HCT116 (cell line): ENCODE measurements at regions of chr4 and their contacts with region 1.

Region 1: GRCh38 chr4:15956179-15956850 is 6.7 kb downstream of the FGFBP2 start:
- DNase-seq: peak; percentile 78
- ATAC-seq: peak; percentile 96
- H3K4me3 ChIP-seq: no peak overlapping the region
- H3K27ac ChIP-seq: no peak overlapping the region
- H3K4me1 ChIP-seq: peaks cover 0 to 7% of the 10 kb centered on the region in 2 experiments; a peak in 3 of 4 replicates
- H3K27me3 ChIP-seq: no peaks in the 10 kb centered on the region
- CTCF ChIP-seq: peak; percentile 92 to 97 (median 95)
- POLR2A ChIP-seq: no peak
- RAD21 ChIP-seq: peak; percentile 100

Region 2: GRCh38 chr4:15479089-15479912 is 477.0 kb before region 1 on chr4:
- CTCF ChIA-PET with region 1: interaction called, 44 read pairs
- POLR2A ChIA-PET with region 1: interaction called, 3 read pairs
- RAD21 ChIA-PET with region 1: interaction called, 11 to 17 read pairs
- intact Hi-C with region 1: loop called (anchors 1 kb)
- DNase-seq: peak; percentile 82
- ATAC-seq: peak; percentile 87
- H3K4me3 ChIP-seq: peak overlapping the region; percentile 62 to 68
- H3K27ac ChIP-seq: peak overlapping the region; percentile 56
- H3K4me1 ChIP-seq: peaks cover 5 to 11% of the 10 kb centered on the region in 2 experiments
- H3K27me3 ChIP-seq: no peaks in the 10 kb centered on the region
- CTCF ChIP-seq: peak; percentile 64 to 79 (median 74)
- POLR2A ChIP-seq: peak; percentile 70
- RAD21 ChIP-seq: peak; percentile 92

Region 3: DNA sequence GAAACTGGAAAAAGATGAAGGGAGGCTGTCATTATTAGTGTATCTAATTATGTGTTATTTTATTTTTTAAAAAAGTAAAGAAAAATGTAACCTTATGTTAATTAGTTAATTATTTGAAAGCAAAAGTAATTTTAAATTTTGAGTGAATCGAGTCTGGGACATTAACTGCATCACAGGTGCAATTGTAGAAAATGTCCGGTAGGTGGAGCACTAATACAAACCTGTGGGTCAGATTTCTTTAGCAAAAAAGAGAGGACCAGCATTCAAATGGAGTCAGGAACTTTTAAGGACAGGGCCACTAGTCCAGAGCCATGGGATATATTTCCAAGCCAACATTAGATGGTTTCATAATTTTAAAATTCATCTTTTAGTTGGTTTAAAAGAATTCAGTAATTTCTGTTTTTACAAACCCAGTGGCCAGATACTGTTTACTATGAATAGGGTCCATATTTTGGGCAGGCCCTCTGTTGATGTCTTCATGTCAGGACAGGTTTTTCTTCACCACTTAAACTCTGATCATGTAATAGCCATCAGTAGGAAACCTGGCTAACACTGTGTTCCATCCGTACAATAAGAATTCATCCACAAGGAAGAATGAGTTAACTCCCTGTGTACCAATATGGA is 226.3 kb before region 1 on chr4:
- CTCF ChIA-PET with region 1: no interaction called
- POLR2A ChIA-PET with region 1: no interaction called
- RAD21 ChIA-PET with region 1: no interaction called
- intact Hi-C with region 1: loop called (anchors 1 kb)
- DNase-seq: peak; percentile 19
- ATAC-seq: peak; percentile 84
- H3K4me3 ChIP-seq: no peak overlapping the region
- H3K27ac ChIP-seq: no peak overlapping the region
- H3K4me1 ChIP-seq: no peaks in the 10 kb centered on the region
- H3K27me3 ChIP-seq: no peaks in the 10 kb centered on the region
- CTCF ChIP-seq: peak; percentile 59 to 74 (median 68); a peak in 5 of 6 replicates
- POLR2A ChIP-seq: no peak
- RAD21 ChIP-seq: peak; percentile 68

Region 4: GRCh38 chr4:15848191-15848842 is 108.0 kb before region 1 on chr4:
- CTCF ChIA-PET with region 1: interaction called, 12 read pairs
- POLR2A ChIA-PET with region 1: no interaction called
- RAD21 ChIA-PET with region 1: interaction called, 4 to 8 read pairs
- intact Hi-C with region 1: no loop called
- DNase-seq: peak; percentile 10
- ATAC-seq: peak; percentile 73
- H3K4me3 ChIP-seq: no peak overlapping the region
- H3K27ac ChIP-seq: no peak overlapping the region
- H3K4me1 ChIP-seq: peaks cover 0 to 8% of the 10 kb centered on the region in 2 experiments; a peak in 1 of 4 replicates
- H3K27me3 ChIP-seq: no peaks in the 10 kb centered on the region
- CTCF ChIP-seq: peak in 2 of 3 experiments; percentile 44 to 49; a peak in 4 of 6 replicates
- POLR2A ChIP-seq: no peak
- RAD21 ChIP-seq: peak; percentile 23; the same call in 1 of the 2 replicates

Region 5: DNA sequence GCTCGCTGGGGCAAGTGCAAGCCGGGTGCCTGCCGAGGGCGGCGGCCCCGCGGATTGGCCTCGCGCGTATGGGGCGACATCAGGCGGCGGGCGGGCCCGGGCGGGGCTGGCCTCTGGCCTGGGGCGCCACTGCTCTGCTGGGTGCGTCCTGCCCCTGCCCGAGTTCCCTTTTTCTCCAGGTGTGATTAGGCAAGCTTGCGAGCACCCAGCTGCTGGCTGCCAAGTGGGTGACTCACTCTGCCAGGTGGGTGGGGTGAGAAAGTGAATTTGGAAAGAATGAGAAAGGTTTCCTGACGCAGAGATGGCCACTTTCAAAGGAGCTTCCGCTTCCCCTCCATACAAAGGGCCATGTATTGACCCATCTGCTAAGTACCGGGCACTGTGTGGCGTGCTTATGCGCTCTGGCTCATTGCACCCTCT is 50.3 kb before region 1 on chr4:
- CTCF ChIA-PET with region 1: interaction called, 17 read pairs
- POLR2A ChIA-PET with region 1: interaction called, 5 read pairs
- RAD21 ChIA-PET with region 1: interaction called in 1 of 2 experiments, 4 read pairs
- intact Hi-C with region 1: no loop called
- DNase-seq: peak; percentile 95
- ATAC-seq: peak; percentile 95
- H3K4me3 ChIP-seq: peak overlapping the region; percentile 18 to 47
- H3K27ac ChIP-seq: peak overlapping the region; percentile 73
- H3K4me1 ChIP-seq: peaks cover 19 to 32% of the 10 kb centered on the region in 2 experiments
- H3K27me3 ChIP-seq: no peaks in the 10 kb centered on the region
- CTCF ChIP-seq: no peak
- POLR2A ChIP-seq: no peak
- RAD21 ChIP-seq: peak; percentile 43

Region 6: GRCh38 chr4:16897991-16898827 is 941.9 kb after region 1 on chr4 and contains the start of gene LDB2:
- CTCF ChIA-PET with region 1: no interaction called
- POLR2A ChIA-PET with region 1: no interaction called
- RAD21 ChIA-PET with region 1: no interaction called
- intact Hi-C with region 1: no loop called
- DNase-seq: no peak
- ATAC-seq: no peak
- H3K4me3 ChIP-seq: no peak within 1 kb of the TSS
- H3K27ac ChIP-seq: no peak within 1 kb of the TSS
- H3K4me1 ChIP-seq: no peaks in the 10 kb centered on the region
- H3K27me3 ChIP-seq: peaks cover 24% of the 10 kb centered on the region
- CTCF ChIP-seq: no peak
- POLR2A ChIP-seq: no peak
- RAD21 ChIP-seq: no peak
- total RNA-seq, gene LDB2: 0.12 TPM